ENCODE measurements at regions of chr17 and their contacts with region 1.

Region 1: DNA sequence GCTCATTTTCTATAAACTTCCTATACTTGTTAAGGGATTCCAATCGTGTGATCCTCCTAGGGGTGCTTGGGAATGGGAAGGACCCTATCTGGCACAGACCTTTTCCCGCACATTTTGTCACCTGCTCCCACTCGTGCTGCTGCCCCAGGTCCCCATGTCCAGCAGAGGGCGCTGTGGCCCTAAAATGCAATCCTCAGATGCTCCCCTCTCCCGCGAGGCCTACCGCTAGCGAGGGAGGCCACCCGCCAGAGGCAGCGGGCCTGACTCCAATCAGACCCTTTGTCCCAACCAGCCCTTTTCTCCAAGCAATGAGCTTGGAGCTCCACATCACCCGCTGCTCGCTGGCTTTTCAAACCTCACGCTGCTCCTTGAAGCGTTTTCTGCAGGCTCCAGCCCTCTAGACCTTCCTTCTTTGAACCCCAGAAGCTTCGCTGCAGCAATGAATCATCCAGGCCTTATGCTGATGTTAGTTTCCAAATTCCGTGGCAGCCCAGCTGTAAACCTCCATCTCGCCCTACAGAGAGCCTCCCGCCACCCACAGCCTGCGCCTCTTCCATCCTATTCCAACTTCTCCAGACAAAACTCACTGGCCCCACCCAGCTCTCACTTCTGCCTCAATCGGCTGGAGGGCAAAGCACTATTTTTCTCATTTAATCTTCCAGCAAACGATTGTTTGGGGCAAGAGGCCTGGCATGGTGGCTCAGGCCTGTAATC is 23.6 kb upstream of the FZD2 start:
- DNase-seq: peak; percentile 92 to 97 (median 95)
- ATAC-seq: peak; percentile 92
- H3K4me3 ChIP-seq: no peak overlapping the region
- H3K27ac ChIP-seq: no peak overlapping the region
- H3K4me1 ChIP-seq: no peaks in the 10 kb centered on the region
- H3K27me3 ChIP-seq: no peaks in the 10 kb centered on the region

Region 2: DNA sequence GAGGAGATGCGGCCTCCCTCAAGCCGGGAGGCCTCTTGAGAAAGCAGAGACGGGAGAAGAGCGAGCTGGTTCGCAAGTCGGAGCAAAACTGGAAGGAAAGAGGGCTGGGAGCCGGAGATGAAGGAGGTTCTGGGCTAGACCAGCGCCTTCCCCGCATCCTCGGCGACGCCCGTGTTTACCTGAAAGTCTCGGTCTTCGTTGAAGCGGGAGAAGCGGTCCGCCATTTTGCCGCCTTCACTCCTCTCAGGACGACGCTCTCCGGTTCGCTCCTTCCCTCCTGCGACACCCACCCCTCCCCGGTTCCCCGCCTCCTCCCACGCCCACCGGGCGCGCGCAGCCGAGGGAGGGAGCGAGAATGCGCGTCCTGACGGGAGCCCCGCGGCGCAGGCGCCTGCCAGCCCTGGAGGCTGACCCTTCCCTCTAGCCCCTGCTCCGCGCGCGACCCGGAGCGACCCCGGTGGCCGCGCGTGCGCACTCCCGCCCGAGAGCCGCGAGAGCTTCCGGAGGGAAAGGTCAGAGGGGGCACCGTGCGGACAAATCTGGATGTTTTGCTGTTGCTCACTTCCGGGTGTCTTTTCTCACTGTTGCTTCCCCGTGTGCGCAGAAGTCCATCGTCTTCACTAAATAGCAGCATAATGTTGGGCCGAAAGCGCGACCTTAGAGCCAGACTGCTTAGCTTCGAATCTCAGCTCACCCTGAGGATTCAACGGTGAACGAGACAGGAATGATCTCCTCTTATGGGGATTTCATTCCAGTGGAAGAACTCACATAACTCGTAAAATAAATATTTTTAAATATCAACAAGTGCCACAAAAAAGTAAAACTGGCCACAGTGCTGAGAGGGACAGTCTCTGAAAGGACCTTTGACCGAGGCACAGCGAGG is 30.3 kb before region 1 on chr17 and contains the start of gene GPATCH8:
- intact Hi-C with region 1: no loop called
- DNase-seq: peak; percentile 96 to 99 (median 98)
- ATAC-seq: peak; percentile 97 to 99
- H3K4me3 ChIP-seq: peak within 1 kb of the TSS; percentile 67
- H3K27ac ChIP-seq: peak within 1 kb of the TSS; percentile 87
- H3K4me1 ChIP-seq: no peaks in the 10 kb centered on the region
- H3K27me3 ChIP-seq: no peaks in the 10 kb centered on the region
- total RNA-seq, gene GPATCH8: 32.4 to 35.9 (median 33.9) TPM

Region 3: DNA sequence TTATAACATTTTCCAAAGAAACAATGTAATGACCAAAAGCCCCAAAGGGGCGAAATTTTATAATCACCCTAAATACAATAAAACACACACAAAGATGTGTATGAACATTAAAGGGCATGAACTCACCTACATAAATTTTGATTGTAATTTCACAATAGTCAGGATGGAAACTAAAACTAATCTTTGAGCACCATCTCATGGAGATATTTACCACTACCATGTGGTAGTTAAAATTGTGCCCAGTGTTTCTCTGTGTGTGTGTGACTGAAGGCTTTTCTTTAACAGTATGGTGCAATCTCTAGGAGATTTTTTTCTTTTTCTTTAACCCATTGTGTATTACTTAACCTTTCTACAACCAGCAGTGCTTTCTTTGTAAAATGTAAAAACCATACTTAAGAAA is 102.9 kb after region 1 on chr17:
- intact Hi-C with region 1: loop called in 3 of 4 experiments (anchors 2 to 5 kb)
- DNase-seq: no peak
- ATAC-seq: peak in 1 of 2 donors; percentile 39
- H3K4me3 ChIP-seq: no peak overlapping the region
- H3K27ac ChIP-seq: no peak overlapping the region
- H3K4me1 ChIP-seq: no peaks in the 10 kb centered on the region
- H3K27me3 ChIP-seq: no peaks in the 10 kb centered on the region